AG04450 (cell line): ENCODE measurements at regions of chr10 and their contacts with region 1.

Region 1: GRCh38 chr10:27742195-27743011 is 3.2 kb downstream of the MKX start:
- DNase-seq: peak; percentile 68
- H3K4me3 ChIP-seq: peak overlapping the region; percentile 57
- H3K27ac ChIP-seq: peak overlapping the region; percentile 88
- H3K27me3 ChIP-seq: peaks cover 54% of the 10 kb centered on the region
- CTCF ChIP-seq: peak; percentile 74

Region 2: GRCh38 chr10:27724287-27724686 is 18.1 kb before region 1 on chr10:
- CTCF ChIA-PET with region 1: interaction called, 17 read pairs
- POLR2A ChIA-PET with region 1: interaction called, 3 read pairs
- DNase-seq: no peak
- H3K4me3 ChIP-seq: no peak overlapping the region
- H3K27ac ChIP-seq: no peak overlapping the region
- H3K27me3 ChIP-seq: no peaks in the 10 kb centered on the region
- CTCF ChIP-seq: peak; percentile 38

Region 3: DNA sequence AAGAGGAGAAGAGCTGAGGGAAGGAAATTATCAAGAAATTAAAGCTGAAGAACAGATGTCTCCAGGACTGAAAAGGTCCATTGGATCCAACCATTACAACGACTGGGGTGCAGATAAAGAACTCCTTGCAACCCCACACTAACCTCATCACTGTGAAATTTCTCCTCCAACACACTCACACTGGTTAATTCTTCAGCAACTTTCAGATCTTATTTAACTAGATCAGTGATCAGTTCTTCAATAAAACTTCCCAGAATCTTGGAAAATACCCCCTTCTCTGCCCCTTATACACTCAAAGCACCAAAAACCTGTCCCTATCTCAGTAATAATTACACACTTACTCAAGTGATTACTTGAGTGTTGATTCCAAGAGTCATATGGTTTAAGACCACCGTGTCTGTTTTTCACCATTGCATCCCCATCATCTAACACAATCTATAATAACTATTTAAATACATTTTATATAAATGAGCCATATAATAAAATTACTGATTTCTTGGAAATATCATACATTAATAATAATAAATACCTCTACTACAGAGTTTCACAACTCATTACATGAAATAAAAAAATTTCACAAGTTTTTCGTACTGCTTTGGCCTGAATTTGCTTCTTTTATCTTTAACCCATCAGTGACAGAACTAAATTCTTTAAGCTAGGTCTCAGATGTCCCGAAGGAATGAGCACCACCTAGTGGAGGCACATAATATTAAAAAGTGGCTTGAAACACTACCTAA is 436.8 kb after region 1 on chr10:
- CTCF ChIA-PET with region 1: interaction called, 28 read pairs
- POLR2A ChIA-PET with region 1: no interaction called
- DNase-seq: peak; percentile 41
- H3K4me3 ChIP-seq: no peak overlapping the region
- H3K27ac ChIP-seq: no peak overlapping the region
- H3K27me3 ChIP-seq: no peaks in the 10 kb centered on the region
- CTCF ChIP-seq: peak; percentile 76